CD4-positive, alpha-beta T cell (primary cell): ENCODE measurements at regions of chr1 and their contacts with region 1.

Region 1: DNA sequence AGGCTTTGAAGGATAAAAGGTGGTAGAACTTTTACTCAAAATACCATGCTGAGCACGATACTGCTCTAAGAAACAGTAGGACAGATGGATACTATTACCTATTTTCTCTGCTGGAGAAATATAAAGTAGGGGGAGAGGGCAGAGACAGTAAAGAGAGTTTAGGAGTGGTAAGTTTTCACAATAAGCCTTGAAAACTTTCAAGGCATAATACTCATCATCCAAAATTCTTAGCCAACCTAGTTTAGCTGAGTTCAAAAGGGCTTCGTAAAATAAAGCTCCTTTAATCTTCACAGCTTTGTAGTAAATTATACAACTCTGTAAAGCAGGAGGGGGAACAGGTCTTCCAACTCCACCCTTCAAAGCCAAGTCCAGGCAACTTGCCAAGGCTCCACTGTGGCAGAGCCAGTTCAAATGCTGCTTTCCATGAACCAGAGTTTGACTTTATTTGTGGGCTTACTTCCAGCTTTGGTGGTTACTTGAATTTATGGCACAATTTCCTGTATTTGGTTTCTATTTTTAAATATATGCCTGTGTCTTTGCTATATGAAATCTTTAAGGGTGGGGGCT is 15.5 kb downstream of the TEX38 start:
- DNase-seq: no peak
- ATAC-seq: no peak
- H3K4me3 ChIP-seq: no peak overlapping the region
- H3K4me3 Mint-ChIP-seq: no peak overlapping the region
- H3K27ac ChIP-seq: no peak overlapping the region
- H3K27ac Mint-ChIP-seq: peak overlapping the region; percentile 61
- H3K4me1 ChIP-seq: no peaks in the 10 kb centered on the region
- H3K4me1 Mint-ChIP-seq: peaks cover 17% of the 10 kb centered on the region
- H3K27me3 ChIP-seq: no peaks in the 10 kb centered on the region
- H3K27me3 Mint-ChIP-seq: no peaks in the 10 kb centered on the region
- CTCF ChIP-seq: no peak

Region 2: DNA sequence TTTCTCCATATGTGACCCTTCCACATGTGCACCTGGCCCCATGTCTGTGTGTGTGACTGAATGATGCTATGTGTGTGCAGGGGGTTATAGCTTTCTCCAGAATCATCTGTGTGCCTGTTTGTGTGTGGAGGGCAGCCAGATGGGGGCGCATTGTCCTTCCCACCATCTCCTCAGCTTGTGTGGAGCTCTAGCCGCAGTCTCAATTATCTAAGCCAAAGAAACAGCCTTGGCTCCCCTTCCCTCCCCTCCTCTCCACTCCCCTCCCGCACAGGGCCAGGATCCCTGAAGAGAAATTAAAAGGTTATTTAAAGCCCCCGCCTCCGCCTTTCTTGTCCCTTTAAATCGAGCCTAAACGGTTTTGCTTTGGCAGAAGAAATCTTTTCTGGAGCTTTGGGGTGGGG is 199.4 kb before region 1 on chr1:
- CTCF ChIA-PET with region 1: no interaction called
- POLR2A ChIA-PET with region 1: no interaction called
- intact Hi-C with region 1: no loop called
- DNase-seq: no peak
- ATAC-seq: no peak
- H3K4me3 ChIP-seq: no peak overlapping the region
- H3K4me3 Mint-ChIP-seq: no peak overlapping the region
- H3K27ac ChIP-seq: no peak overlapping the region
- H3K27ac Mint-ChIP-seq: no peak overlapping the region
- H3K4me1 ChIP-seq: peaks cover 22% of the 10 kb centered on the region
- H3K4me1 Mint-ChIP-seq: peaks cover 20% of the 10 kb centered on the region
- H3K27me3 ChIP-seq: peaks cover 74 to 89% of the 10 kb centered on the region in 2 experiments
- H3K27me3 Mint-ChIP-seq: peaks cover 85% of the 10 kb centered on the region
- CTCF ChIP-seq: no peak

Region 3: DNA sequence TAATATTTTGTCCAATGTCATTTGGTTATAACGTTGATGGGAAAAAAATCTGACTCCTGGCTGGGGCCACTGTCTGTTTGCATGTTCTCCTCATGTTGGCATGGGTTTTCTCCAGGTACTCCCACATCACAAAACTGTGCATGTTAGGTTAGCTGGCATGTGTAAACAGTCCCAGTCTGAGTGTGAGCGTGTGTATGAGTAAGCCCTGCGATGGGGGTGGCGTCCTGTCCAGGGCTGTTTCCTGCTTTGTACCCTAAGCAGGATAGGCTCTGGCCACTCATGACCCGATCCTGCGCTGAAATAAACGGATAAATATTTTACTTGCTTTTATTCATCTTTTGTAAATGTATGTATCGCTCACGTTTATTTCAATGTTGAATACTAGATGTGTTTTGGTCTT is 18.2 kb after region 1 on chr1:
- CTCF ChIA-PET with region 1: no interaction called
- POLR2A ChIA-PET with region 1: no interaction called
- intact Hi-C with region 1: loop called in 1 of 2 experiments (anchors 2 kb)
- DNase-seq: no peak
- ATAC-seq: no peak
- H3K4me3 ChIP-seq: no peak overlapping the region
- H3K4me3 Mint-ChIP-seq: no peak overlapping the region
- H3K27ac ChIP-seq: no peak overlapping the region
- H3K27ac Mint-ChIP-seq: no peak overlapping the region
- H3K4me1 ChIP-seq: peaks cover 2% of the 10 kb centered on the region
- H3K4me1 Mint-ChIP-seq: peaks cover 36% of the 10 kb centered on the region
- H3K27me3 ChIP-seq: no peaks in the 10 kb centered on the region
- H3K27me3 Mint-ChIP-seq: no peaks in the 10 kb centered on the region
- CTCF ChIP-seq: no peak